Naive thymus-derived CD4-positive, alpha-beta T cell (primary cell): ENCODE measurements at regions of chr3 and their contacts with region 1.

Region 1: GRCh38 chr3:56915966-56916586 is 114.3 kb upstream of the ARHGEF3 start:
- DNase-seq: peak; percentile 33 to 82 (median 76)
- ATAC-seq: peak; percentile 94
- H3K4me3 ChIP-seq: peak overlapping the region; percentile 97
- H3K4me3 Mint-ChIP-seq: peak overlapping the region; percentile 89 to 98 (median 94)
- H3K27ac ChIP-seq: peak overlapping the region; percentile 81
- H3K27ac Mint-ChIP-seq: peak overlapping the region; percentile 92 to 99 (median 98)
- H3K4me1 ChIP-seq: peaks cover 42 to 47% of the 10 kb centered on the region in 2 donors
- H3K4me1 Mint-ChIP-seq: peaks cover 54 to 86% (median 83%) of the 10 kb centered on the region in 7 donors
- H3K27me3 ChIP-seq: no peaks in the 10 kb centered on the region
- H3K27me3 Mint-ChIP-seq: no peaks in the 10 kb centered on the region

Region 2: GRCh38 chr3:56556908-56557830 is 358.9 kb before region 1 on chr3 and contains the start of gene CCDC66:
- CTCF ChIA-PET with region 1: no interaction called
- POLR2A ChIA-PET with region 1: interaction called, 3 read pairs
- intact Hi-C with region 1: loop called in 1 of 2 experiments (anchors 5 kb)
- DNase-seq: peak; percentile 85 to 95 (median 93)
- ATAC-seq: peak; percentile 96
- H3K4me3 ChIP-seq: peak within 1 kb of the TSS; percentile 96
- H3K4me3 Mint-ChIP-seq: peak within 1 kb of the TSS; percentile 91 to 100 (median 98)
- H3K27ac ChIP-seq: peak within 1 kb of the TSS; percentile 99
- H3K27ac Mint-ChIP-seq: peak within 1 kb of the TSS; percentile 93 to 100 (median 98)
- H3K4me1 ChIP-seq: peaks cover 9 to 17% of the 10 kb centered on the region in 2 donors
- H3K4me1 Mint-ChIP-seq: peaks cover 12 to 51% (median 38%) of the 10 kb centered on the region in 7 donors
- H3K27me3 ChIP-seq: no peaks in the 10 kb centered on the region
- H3K27me3 Mint-ChIP-seq: peaks cover 0 to 25% (median 0%) of the 10 kb centered on the region in 5 donors
- total RNA-seq, gene CCDC66: 38.6 to 115 (median 77.3) TPM

Region 3: DNA sequence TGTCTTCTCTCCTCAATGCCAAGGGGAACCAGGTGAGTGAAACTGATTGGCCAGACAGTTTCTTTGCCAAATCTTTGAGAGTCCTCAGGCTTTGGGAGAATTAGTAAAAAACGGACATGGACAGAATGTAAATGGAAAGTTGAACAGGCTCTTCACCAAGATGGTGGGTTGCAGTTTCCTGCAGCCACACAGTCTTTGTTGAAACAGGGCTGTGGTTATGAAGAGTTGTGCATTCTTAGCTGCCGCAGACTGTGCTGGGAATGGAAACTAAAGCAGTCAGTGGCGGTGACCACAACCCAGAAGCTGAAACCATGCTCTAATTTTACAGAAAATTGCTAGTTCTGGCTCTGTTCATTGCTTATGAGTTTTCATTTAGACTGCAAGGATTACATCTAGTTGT is 190.9 kb before region 1 on chr3:
- CTCF ChIA-PET with region 1: no interaction called
- POLR2A ChIA-PET with region 1: interaction called, 4 read pairs
- intact Hi-C with region 1: loop called in 1 of 2 experiments (anchors 1 kb)
- DNase-seq: peak in 7 of 9 donors; percentile 27 to 61 (median 44)
- ATAC-seq: peak; percentile 88
- H3K4me3 ChIP-seq: no peak overlapping the region
- H3K4me3 Mint-ChIP-seq: peak overlapping the region; percentile 55 to 87 (median 72)
- H3K27ac ChIP-seq: peak overlapping the region; percentile 51
- H3K27ac Mint-ChIP-seq: peak overlapping the region; percentile 63 to 98 (median 90)
- H3K4me1 ChIP-seq: peaks cover 20 to 31% of the 10 kb centered on the region in 2 donors
- H3K4me1 Mint-ChIP-seq: peaks cover 12 to 70% (median 51%) of the 10 kb centered on the region in 7 donors
- H3K27me3 ChIP-seq: no peaks in the 10 kb centered on the region
- H3K27me3 Mint-ChIP-seq: no peaks in the 10 kb centered on the region

Region 4: GRCh38 chr3:56862352-56863074 is 53.6 kb before region 1 on chr3:
- CTCF ChIA-PET with region 1: no interaction called
- POLR2A ChIA-PET with region 1: interaction called, 4 read pairs
- intact Hi-C with region 1: loop called in 1 of 2 experiments (anchors 2 kb)
- DNase-seq: no peak
- ATAC-seq: peak; percentile 10
- H3K4me3 ChIP-seq: no peak overlapping the region
- H3K4me3 Mint-ChIP-seq: peak overlapping the region in 3 of 10 donors; percentile 27 to 42 (median 41)
- H3K27ac ChIP-seq: no peak overlapping the region
- H3K27ac Mint-ChIP-seq: peak overlapping the region in 5 of 9 donors; percentile 23 to 66 (median 36)
- H3K4me1 ChIP-seq: peaks cover 13 to 21% of the 10 kb centered on the region in 2 donors
- H3K4me1 Mint-ChIP-seq: peaks cover 38 to 75% (median 67%) of the 10 kb centered on the region in 7 donors
- H3K27me3 ChIP-seq: no peaks in the 10 kb centered on the region
- H3K27me3 Mint-ChIP-seq: no peaks in the 10 kb centered on the region

Region 5: DNA sequence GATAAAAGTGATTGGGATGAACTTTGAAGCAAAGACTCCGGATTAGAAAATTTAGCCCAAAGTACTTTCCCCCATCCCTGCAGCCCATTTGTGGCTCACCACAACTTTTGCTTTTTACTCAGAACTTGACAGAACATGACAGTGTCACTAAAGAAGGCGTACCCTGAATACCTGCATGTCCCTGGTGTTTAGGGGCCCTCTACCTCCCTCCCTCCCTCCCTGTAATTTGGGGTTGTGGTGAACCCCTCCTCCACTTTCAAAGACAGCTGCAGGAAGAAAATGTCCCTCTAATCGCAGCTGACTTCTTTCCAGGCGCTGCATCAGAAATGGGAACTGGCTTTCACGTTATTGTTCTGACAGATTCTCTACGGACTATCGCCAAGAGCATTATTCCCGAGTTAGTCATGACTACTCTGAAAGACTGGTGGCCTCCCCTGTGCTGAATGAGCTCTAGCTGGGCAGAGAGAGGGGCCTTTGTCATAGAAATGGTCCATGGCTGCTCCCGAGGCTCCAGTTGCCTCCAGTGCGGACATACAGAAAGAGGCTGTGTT is 21.1 kb before region 1 on chr3:
- CTCF ChIA-PET with region 1: interaction called, 3 read pairs
- POLR2A ChIA-PET with region 1: interaction called, 44 read pairs
- intact Hi-C with region 1: loop called in 1 of 2 experiments (anchors 1 kb)
- DNase-seq: peak in 2 of 9 donors; percentile 21 to 33
- ATAC-seq: peak; percentile 62
- H3K4me3 ChIP-seq: no peak overlapping the region
- H3K4me3 Mint-ChIP-seq: peak overlapping the region; percentile 29 to 72 (median 45)
- H3K27ac ChIP-seq: peak overlapping the region; percentile 46
- H3K27ac Mint-ChIP-seq: peak overlapping the region in 8 of 9 donors; percentile 21 to 74 (median 61)
- H3K4me1 ChIP-seq: peaks cover 20 to 39% of the 10 kb centered on the region in 2 donors
- H3K4me1 Mint-ChIP-seq: peaks cover 29 to 86% (median 70%) of the 10 kb centered on the region in 7 donors
- H3K27me3 ChIP-seq: no peaks in the 10 kb centered on the region
- H3K27me3 Mint-ChIP-seq: no peaks in the 10 kb centered on the region

Region 6: DNA sequence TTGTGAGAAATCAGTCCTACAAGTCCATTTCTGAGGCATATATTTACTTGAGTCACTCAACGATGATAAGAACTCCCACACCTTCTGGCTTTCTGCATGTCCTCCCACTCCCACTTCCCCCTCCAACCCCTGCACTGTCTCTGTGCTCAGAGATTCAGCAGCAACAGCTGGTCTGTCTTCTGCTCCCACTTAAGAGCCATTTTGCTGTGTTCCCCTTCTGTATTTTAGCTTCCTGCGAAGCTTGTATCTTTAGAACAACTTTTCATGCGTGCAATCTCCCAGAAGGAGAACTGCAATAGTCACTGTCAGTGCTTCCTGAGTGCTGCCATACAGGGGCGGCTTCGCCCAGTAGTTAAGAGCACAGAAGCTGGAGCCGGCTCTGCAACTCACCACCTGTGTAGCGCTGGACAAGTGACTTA is 54.4 kb after region 1 on chr3:
- CTCF ChIA-PET with region 1: no interaction called
- POLR2A ChIA-PET with region 1: no interaction called
- intact Hi-C with region 1: no loop called
- DNase-seq: no peak
- ATAC-seq: peak; percentile 42
- H3K4me3 ChIP-seq: no peak overlapping the region
- H3K4me3 Mint-ChIP-seq: no peak overlapping the region
- H3K27ac ChIP-seq: no peak overlapping the region
- H3K27ac Mint-ChIP-seq: peak overlapping the region in 1 of 9 donors; percentile 1
- H3K4me1 ChIP-seq: no peaks in the 10 kb centered on the region
- H3K4me1 Mint-ChIP-seq: peaks cover 0 to 11% (median 3%) of the 10 kb centered on the region in 7 donors
- H3K27me3 ChIP-seq: no peaks in the 10 kb centered on the region
- H3K27me3 Mint-ChIP-seq: no peaks in the 10 kb centered on the region

Region 7: GRCh38 chr3:56988458-56989168 is 72.5 kb after region 1 on chr3:
- CTCF ChIA-PET with region 1: interaction called, 31 read pairs
- POLR2A ChIA-PET with region 1: interaction called, 8 read pairs
- intact Hi-C with region 1: loop called (anchors 1 to 2 kb)
- DNase-seq: peak; percentile 45 to 76 (median 63)
- ATAC-seq: peak; percentile 85
- H3K4me3 ChIP-seq: no peak overlapping the region
- H3K4me3 Mint-ChIP-seq: peak overlapping the region in 5 of 10 donors; percentile 29 to 46 (median 42)
- H3K27ac ChIP-seq: no peak overlapping the region
- H3K27ac Mint-ChIP-seq: peak overlapping the region in 3 of 9 donors; percentile 28 to 81 (median 62)
- H3K4me1 ChIP-seq: peaks cover 3 to 9% of the 10 kb centered on the region in 2 donors
- H3K4me1 Mint-ChIP-seq: peaks cover 5 to 34% (median 18%) of the 10 kb centered on the region in 7 donors
- H3K27me3 ChIP-seq: no peaks in the 10 kb centered on the region
- H3K27me3 Mint-ChIP-seq: peaks cover 0 to 26% (median 5%) of the 10 kb centered on the region in 5 donors

Region 8: DNA sequence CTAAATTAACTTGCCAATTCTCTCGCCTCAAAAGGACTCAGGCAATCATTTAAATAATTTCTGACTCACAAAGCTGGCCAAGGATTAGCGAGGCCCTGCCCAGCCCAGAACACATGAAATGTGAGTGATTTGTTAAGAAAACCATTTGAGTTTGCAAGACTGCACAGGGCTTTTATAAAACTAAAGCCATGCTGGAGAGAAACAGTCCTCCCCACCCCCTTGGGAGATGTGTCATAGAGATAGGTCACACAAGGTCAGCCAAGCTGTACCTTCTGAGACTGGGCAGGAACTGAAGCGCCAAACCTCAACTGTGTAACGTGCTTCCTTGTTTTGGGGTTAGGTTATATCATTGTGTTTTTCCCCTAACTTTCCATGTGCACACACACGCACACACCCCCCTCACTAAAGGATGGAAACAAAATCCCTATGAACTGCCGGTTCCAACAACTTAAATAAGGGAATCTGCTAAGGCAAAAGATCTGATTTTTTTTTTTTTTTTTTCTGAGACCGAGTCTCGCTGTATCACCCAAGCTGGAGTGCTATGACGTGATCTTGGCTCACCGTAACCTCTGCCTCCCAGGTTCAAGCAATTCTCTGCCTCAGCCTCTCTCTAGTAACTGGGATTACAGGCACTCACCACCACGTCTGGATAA is 152.5 kb after region 1 on chr3:
- CTCF ChIA-PET with region 1: no interaction called
- POLR2A ChIA-PET with region 1: no interaction called
- intact Hi-C with region 1: no loop called
- DNase-seq: no peak
- ATAC-seq: peak; percentile 94
- H3K4me3 ChIP-seq: no peak overlapping the region
- H3K4me3 Mint-ChIP-seq: no peak overlapping the region
- H3K27ac ChIP-seq: no peak overlapping the region
- H3K27ac Mint-ChIP-seq: no peak overlapping the region
- H3K4me1 ChIP-seq: no peaks in the 10 kb centered on the region
- H3K4me1 Mint-ChIP-seq: peaks cover 0 to 5% (median 0%) of the 10 kb centered on the region in 7 donors
- H3K27me3 ChIP-seq: no peaks in the 10 kb centered on the region
- H3K27me3 Mint-ChIP-seq: peaks cover 21 to 29% (median 29%) of the 10 kb centered on the region in 5 donors

Region 9: GRCh38 chr3:57354768-57355167 is 438.7 kb after region 1 on chr3:
- CTCF ChIA-PET with region 1: no interaction called
- POLR2A ChIA-PET with region 1: no interaction called
- intact Hi-C with region 1: no loop called
- DNase-seq: peak in 3 of 9 donors; percentile 3 to 20 (median 5)
- ATAC-seq: peak; percentile 48
- H3K4me3 ChIP-seq: no peak overlapping the region
- H3K4me3 Mint-ChIP-seq: no peak overlapping the region
- H3K27ac ChIP-seq: no peak overlapping the region
- H3K27ac Mint-ChIP-seq: no peak overlapping the region
- H3K4me1 ChIP-seq: no peaks in the 10 kb centered on the region
- H3K4me1 Mint-ChIP-seq: peaks cover 0 to 8% (median 5%) of the 10 kb centered on the region in 7 donors
- H3K27me3 ChIP-seq: no peaks in the 10 kb centered on the region
- H3K27me3 Mint-ChIP-seq: peaks cover 0 to 5% (median 0%) of the 10 kb centered on the region in 5 donors

Region 10: GRCh38 chr3:57464801-57465200 is 548.7 kb after region 1 on chr3:
- CTCF ChIA-PET with region 1: no interaction called
- POLR2A ChIA-PET with region 1: no interaction called
- intact Hi-C with region 1: no loop called
- DNase-seq: no peak
- ATAC-seq: no peak
- H3K4me3 ChIP-seq: no peak overlapping the region
- H3K4me3 Mint-ChIP-seq: no peak overlapping the region
- H3K27ac ChIP-seq: no peak overlapping the region
- H3K27ac Mint-ChIP-seq: no peak overlapping the region
- H3K4me1 ChIP-seq: no peaks in the 10 kb centered on the region
- H3K4me1 Mint-ChIP-seq: peaks cover 0 to 6% (median 0%) of the 10 kb centered on the region in 7 donors
- H3K27me3 ChIP-seq: no peaks in the 10 kb centered on the region
- H3K27me3 Mint-ChIP-seq: peaks cover 0 to 31% (median 0%) of the 10 kb centered on the region in 5 donors